ENCODE measurements at regions of chr11 and their contacts with region 1.

Region 1: GRCh38 chr11:77187776-77188632 is 60.0 kb downstream of the MYO7A start:
- DNase-seq: peak; percentile 83 to 91
- H3K4me3 ChIP-seq: no peak overlapping the region
- H3K4me3 Mint-ChIP-seq: no peak overlapping the region
- H3K27ac Mint-ChIP-seq: no peak overlapping the region
- H3K4me1 ChIP-seq: no peaks in the 10 kb centered on the region
- H3K4me1 Mint-ChIP-seq: no peaks in the 10 kb centered on the region
- H3K27me3 ChIP-seq: no peaks in the 10 kb centered on the region
- H3K27me3 Mint-ChIP-seq: no peaks in the 10 kb centered on the region
- CTCF ChIP-seq: peak; percentile 98 to 99

Region 2: DNA sequence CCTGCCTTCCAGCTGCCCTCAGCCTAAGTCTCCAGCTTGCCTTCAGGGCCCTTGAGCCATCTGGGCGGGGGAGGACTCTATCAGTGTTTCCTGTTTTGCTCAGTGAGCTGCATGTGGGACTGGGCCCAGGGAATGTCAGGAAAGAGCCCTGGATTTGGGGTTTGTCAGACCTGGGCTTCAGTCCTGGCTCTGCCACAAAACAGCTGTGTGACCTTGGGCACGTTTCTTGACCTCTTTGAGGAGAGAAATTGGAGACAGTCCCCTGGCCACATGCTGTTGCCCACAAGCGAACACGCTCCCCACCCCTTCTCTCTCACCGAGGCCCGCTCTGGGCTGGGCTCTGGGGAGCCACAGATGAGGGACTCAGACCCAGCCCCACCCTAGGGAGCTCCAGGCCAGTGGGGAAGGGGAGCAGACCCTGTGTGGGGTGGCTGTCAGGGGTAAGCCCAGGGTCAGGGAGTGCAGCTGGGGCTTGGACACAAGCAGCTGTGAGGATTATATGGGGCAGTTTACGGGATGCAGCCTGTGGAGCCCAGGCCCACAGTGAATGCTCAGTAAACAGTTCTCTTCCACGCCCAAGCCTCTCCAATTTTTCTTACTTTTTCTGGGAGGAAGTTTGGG is 47.7 kb before region 1 on chr11:
- CTCF ChIA-PET with region 1: interaction called, 5 read pairs
- POLR2A ChIA-PET with region 1: no interaction called
- intact Hi-C with region 1: loop called (anchors 1 kb)
- DNase-seq: no peak
- H3K4me3 ChIP-seq: no peak overlapping the region
- H3K4me3 Mint-ChIP-seq: no peak overlapping the region
- H3K27ac Mint-ChIP-seq: peak overlapping the region; percentile 54
- H3K4me1 ChIP-seq: peaks cover 36% of the 10 kb centered on the region
- H3K4me1 Mint-ChIP-seq: peaks cover 30% of the 10 kb centered on the region
- H3K27me3 ChIP-seq: no peaks in the 10 kb centered on the region
- H3K27me3 Mint-ChIP-seq: no peaks in the 10 kb centered on the region
- CTCF ChIP-seq: no peak

Region 3: DNA sequence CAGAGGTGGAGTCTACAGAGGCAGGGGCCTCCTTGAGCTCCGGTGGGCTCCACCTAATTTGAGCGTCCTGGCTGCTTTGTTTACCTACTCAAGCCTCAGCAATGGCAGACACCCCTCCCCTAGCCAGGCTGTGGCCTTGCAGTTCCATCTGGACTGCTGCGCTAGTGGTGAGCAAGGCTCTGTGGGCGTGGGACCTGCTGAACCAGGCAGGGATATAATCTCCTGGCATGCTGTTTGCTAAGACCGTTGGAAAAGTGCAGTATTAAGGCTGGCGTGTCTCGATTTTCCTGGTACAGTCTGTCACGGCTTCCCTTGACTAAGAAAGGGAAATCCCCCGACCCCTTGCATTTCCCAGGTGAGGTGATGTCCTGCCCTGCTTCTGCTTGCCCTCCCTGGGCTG is 35.8 kb after region 1 on chr11:
- CTCF ChIA-PET with region 1: no interaction called
- POLR2A ChIA-PET with region 1: no interaction called
- intact Hi-C with region 1: no loop called
- DNase-seq: no peak
- H3K4me3 ChIP-seq: no peak overlapping the region
- H3K4me3 Mint-ChIP-seq: no peak overlapping the region
- H3K27ac Mint-ChIP-seq: no peak overlapping the region
- H3K4me1 ChIP-seq: no peaks in the 10 kb centered on the region
- H3K4me1 Mint-ChIP-seq: no peaks in the 10 kb centered on the region
- H3K27me3 ChIP-seq: no peaks in the 10 kb centered on the region
- H3K27me3 Mint-ChIP-seq: peaks cover 15% of the 10 kb centered on the region
- CTCF ChIP-seq: no peak

Region 4: DNA sequence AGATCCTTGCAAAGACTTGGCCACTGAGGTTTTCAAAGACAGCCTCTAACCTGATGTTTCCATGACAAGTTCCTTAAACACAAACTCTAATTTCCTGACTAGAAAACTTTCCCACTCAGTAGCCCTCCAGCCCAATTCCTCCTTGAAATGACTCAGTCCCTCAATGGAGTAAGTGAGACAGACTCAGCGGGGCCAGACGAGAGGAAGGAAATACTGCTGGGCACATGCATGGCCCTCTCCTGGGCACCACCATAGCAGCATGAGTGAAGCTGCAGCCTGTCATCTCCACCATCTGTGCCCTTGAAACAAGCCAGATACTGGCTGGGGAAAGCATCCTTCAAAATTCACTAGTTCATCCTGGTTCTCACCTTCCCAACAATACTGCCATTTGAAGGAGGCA is 189.7 kb after region 1 on chr11:
- CTCF ChIA-PET with region 1: no interaction called
- POLR2A ChIA-PET with region 1: no interaction called
- intact Hi-C with region 1: loop called (anchors 10 kb)
- DNase-seq: no peak
- H3K4me3 ChIP-seq: no peak overlapping the region
- H3K4me3 Mint-ChIP-seq: no peak overlapping the region
- H3K27ac Mint-ChIP-seq: no peak overlapping the region
- H3K4me1 ChIP-seq: no peaks in the 10 kb centered on the region
- H3K4me1 Mint-ChIP-seq: no peaks in the 10 kb centered on the region
- H3K27me3 ChIP-seq: no peaks in the 10 kb centered on the region
- H3K27me3 Mint-ChIP-seq: no peaks in the 10 kb centered on the region
- CTCF ChIP-seq: no peak

Region 5: GRCh38 chr11:77411717-77412441 is 223.9 kb after region 1 on chr11:
- CTCF ChIA-PET with region 1: no interaction called
- POLR2A ChIA-PET with region 1: no interaction called
- intact Hi-C with region 1: loop called (anchors 10 kb)
- DNase-seq: no peak
- H3K4me3 ChIP-seq: no peak overlapping the region
- H3K4me3 Mint-ChIP-seq: no peak overlapping the region
- H3K27ac Mint-ChIP-seq: no peak overlapping the region
- H3K4me1 ChIP-seq: no peaks in the 10 kb centered on the region
- H3K4me1 Mint-ChIP-seq: peaks cover 6% of the 10 kb centered on the region
- H3K27me3 ChIP-seq: no peaks in the 10 kb centered on the region
- H3K27me3 Mint-ChIP-seq: no peaks in the 10 kb centered on the region
- CTCF ChIP-seq: no peak

Region 6: DNA sequence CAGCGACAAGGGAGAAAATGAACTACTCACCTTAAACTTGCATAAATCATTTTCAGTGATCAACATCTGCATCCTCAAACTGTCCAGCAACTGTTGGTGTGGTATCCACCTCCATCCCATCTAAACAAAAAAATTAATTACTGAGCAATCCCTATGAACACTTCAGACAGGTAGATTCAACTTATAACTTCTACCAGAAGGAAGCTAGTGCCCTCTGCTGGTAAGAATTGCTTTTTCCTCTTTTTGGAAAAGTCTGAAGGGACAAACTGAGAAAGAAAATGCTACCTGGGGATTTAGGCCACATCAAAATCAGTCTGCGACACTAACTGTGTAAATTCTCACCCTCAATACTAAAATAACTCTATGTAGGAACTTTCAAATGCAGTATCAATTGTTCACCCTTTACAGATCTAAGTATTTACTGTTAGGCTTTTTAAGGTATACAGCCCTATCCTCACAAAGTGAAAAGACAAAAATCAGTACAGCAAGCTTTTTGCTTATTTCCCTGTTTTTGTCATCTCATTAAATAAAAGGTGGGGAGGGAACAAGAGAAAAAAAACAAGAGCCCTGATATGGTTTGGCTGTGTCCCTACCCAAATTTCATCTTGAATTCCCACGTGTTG is 431.7 kb after region 1 on chr11:
- CTCF ChIA-PET with region 1: no interaction called
- POLR2A ChIA-PET with region 1: no interaction called
- intact Hi-C with region 1: loop called (anchors 1 kb)
- DNase-seq: peak in 1 of 2 experiments; percentile 82
- H3K4me3 ChIP-seq: no peak overlapping the region
- H3K4me3 Mint-ChIP-seq: no peak overlapping the region
- H3K27ac Mint-ChIP-seq: no peak overlapping the region
- H3K4me1 ChIP-seq: no peaks in the 10 kb centered on the region
- H3K4me1 Mint-ChIP-seq: no peaks in the 10 kb centered on the region
- H3K27me3 ChIP-seq: no peaks in the 10 kb centered on the region
- H3K27me3 Mint-ChIP-seq: no peaks in the 10 kb centered on the region
- CTCF ChIP-seq: peak; percentile 85 to 90